ENCODE measurements at regions of chr7 and their contacts with region 1.

Region 1: DNA sequence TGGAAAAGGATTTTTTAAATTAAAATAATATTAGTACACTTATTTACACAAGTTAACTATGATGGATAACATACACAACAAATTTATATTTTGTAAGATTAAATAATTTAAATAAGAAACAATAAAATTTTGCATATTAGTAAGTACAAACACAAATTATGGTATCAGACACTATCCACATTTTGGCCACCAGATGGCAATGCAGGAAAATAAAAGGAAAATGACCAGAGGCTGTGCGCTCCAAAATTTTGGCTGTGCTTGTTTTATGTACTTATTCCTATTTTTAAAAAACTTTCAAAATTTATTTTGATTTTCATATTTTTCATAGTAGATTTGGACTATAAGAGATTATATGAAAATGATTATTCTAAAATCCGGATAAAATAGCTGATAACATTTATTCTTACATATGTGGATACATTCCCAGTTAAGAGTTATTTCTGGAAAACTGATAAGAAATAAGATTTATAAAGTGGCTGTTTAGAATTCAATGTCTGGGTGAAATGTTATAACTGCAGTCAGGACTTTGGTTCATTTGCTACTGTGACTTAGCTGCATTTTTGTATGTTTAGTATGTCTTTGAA is 274.7 kb upstream of the HGF start:
- DNase-seq: peak; percentile 67
- H3K4me3 ChIP-seq: no peak overlapping the region
- H3K27ac ChIP-seq: no peak overlapping the region
- H3K4me1 ChIP-seq: peaks cover 27% of the 10 kb centered on the region
- H3K27me3 ChIP-seq: no peaks in the 10 kb centered on the region
- CTCF ChIP-seq: peak; percentile 36
- POLR2A ChIP-seq: no peak

Region 2: GRCh38 chr7:82105463-82105862 is 60.9 kb after region 1 on chr7:
- CTCF ChIA-PET with region 1: interaction called, 4 read pairs
- POLR2A ChIA-PET with region 1: no interaction called
- dilution Hi-C with region 1: no loop called
- intact Hi-C with region 1: loop called (anchors 2 kb)
- DNase-seq: peak; percentile 78
- H3K4me3 ChIP-seq: no peak overlapping the region
- H3K27ac ChIP-seq: peak overlapping the region; percentile 70
- H3K4me1 ChIP-seq: peaks cover 27% of the 10 kb centered on the region
- H3K27me3 ChIP-seq: no peaks in the 10 kb centered on the region
- CTCF ChIP-seq: no peak
- POLR2A ChIP-seq: no peak

Region 3: GRCh38 chr7:82722946-82723345 is 678.4 kb after region 1 on chr7:
- CTCF ChIA-PET with region 1: interaction called, 42 read pairs
- POLR2A ChIA-PET with region 1: no interaction called
- dilution Hi-C with region 1: no loop called
- intact Hi-C with region 1: no loop called
- DNase-seq: no peak
- H3K4me3 ChIP-seq: no peak overlapping the region
- H3K27ac ChIP-seq: no peak overlapping the region
- H3K4me1 ChIP-seq: no peaks in the 10 kb centered on the region
- H3K27me3 ChIP-seq: no peaks in the 10 kb centered on the region
- CTCF ChIP-seq: no peak
- POLR2A ChIP-seq: no peak

Region 4: GRCh38 chr7:82729172-82730030 is 684.8 kb after region 1 on chr7:
- CTCF ChIA-PET with region 1: interaction called, 42 read pairs
- POLR2A ChIA-PET with region 1: no interaction called
- dilution Hi-C with region 1: no loop called
- intact Hi-C with region 1: loop called (anchors 1 kb)
- DNase-seq: peak; percentile 60
- H3K4me3 ChIP-seq: no peak overlapping the region
- H3K27ac ChIP-seq: no peak overlapping the region
- H3K4me1 ChIP-seq: no peaks in the 10 kb centered on the region
- H3K27me3 ChIP-seq: no peaks in the 10 kb centered on the region
- CTCF ChIP-seq: peak; percentile 48 to 62
- POLR2A ChIP-seq: no peak